ENCODE measurements at regions of chr14 and their contacts with region 1.

Region 1: DNA sequence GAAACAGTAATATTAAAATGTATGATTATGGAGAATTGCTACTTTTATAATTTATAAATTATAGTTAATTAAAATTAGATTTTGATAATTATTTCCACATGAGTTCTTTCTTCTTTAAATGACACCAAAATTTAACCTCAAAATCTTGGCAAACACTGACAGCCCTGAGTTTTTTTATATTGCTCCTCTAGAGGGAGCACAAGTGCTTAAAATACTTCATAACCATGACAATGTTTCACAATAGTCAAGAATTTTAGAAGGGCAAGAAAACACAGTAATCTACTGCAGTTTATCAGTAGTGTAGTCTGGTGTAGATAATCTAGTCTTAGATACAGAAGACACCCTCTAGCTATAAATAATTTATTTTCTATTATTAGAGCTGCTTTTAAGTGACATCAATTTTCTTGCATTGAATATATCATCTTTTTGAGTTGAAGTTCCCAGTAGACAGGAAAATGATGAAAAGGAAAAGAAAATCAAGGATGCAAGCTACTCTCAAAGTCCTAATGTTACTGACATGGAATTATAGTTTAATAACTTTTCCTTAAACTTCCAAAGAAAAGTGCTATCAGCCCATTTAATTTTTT is 14.3 kb upstream of the PTGER2 start:
- DNase-seq: no peak
- H3K4me3 Mint-ChIP-seq: no peak overlapping the region
- H3K27ac Mint-ChIP-seq: no peak overlapping the region
- H3K4me1 Mint-ChIP-seq: peaks cover 6% of the 10 kb centered on the region
- H3K27me3 Mint-ChIP-seq: no peaks in the 10 kb centered on the region

Region 2: DNA sequence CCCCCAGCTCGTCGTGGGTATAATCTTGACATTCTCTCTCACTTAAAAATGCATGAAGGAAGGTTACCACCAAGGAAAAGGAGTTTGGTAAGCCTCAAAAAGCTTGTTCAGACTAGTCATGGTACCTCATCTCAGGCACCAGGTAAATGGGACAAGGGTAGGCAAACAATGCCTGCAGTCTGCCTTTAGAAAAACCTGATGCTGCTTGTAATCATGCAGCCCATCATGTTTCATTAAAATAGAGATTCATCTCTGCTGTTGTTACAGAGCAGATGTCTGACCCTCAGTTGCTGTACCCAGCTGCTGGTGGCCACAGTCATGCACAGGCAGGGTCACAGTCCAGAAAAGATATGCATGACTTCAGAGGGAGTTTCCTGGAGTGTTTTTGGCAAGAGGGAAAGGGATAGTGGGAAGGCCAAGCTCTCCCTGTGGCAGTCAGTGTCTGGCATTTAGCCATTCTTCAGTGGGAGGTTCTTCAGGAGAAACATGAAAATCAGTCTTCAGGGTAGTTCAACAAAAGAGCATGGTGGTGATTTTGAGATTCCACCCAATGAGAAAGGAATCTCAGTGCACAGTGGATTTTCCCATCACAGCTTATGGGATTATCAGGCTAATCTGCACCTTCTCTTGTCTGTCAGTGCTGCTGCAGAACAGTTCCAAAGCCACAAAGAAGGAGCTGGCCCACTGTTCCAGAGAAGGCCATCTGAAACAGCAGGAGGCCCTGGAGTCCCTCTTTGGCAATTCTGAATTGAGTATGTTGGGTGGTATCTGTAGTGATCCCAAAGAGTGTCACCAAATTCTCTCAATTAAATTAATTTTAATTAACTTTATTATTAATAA is 850.7 kb before region 1 on chr14:
- CTCF ChIA-PET with region 1: no interaction called
- intact Hi-C with region 1: no loop called
- DNase-seq: no peak
- H3K4me3 Mint-ChIP-seq: no peak overlapping the region
- H3K27ac Mint-ChIP-seq: no peak overlapping the region
- H3K4me1 Mint-ChIP-seq: no peaks in the 10 kb centered on the region
- H3K27me3 Mint-ChIP-seq: peaks cover 3% of the 10 kb centered on the region

Region 3: GRCh38 chr14:51884086-51884927 is 415.5 kb before region 1 on chr14:
- CTCF ChIA-PET with region 1: no interaction called
- intact Hi-C with region 1: no loop called
- DNase-seq: no peak
- H3K4me3 Mint-ChIP-seq: peak overlapping the region; percentile 36
- H3K27ac Mint-ChIP-seq: peak overlapping the region; percentile 28
- H3K4me1 Mint-ChIP-seq: peaks cover 65% of the 10 kb centered on the region
- H3K27me3 Mint-ChIP-seq: no peaks in the 10 kb centered on the region

Region 4: GRCh38 chr14:52154992-52155650 is 144.7 kb before region 1 on chr14:
- CTCF ChIA-PET with region 1: no interaction called
- intact Hi-C with region 1: no loop called
- DNase-seq: no peak
- H3K4me3 Mint-ChIP-seq: no peak overlapping the region
- H3K27ac Mint-ChIP-seq: no peak overlapping the region
- H3K4me1 Mint-ChIP-seq: peaks cover 16% of the 10 kb centered on the region
- H3K27me3 Mint-ChIP-seq: peaks cover 2% of the 10 kb centered on the region

Region 5: GRCh38 chr14:52259434-52259833 is 40.4 kb before region 1 on chr14:
- CTCF ChIA-PET with region 1: no interaction called
- intact Hi-C with region 1: no loop called
- DNase-seq: no peak
- H3K4me3 Mint-ChIP-seq: no peak overlapping the region
- H3K27ac Mint-ChIP-seq: no peak overlapping the region
- H3K4me1 Mint-ChIP-seq: peaks cover 1% of the 10 kb centered on the region
- H3K27me3 Mint-ChIP-seq: peaks cover 2% of the 10 kb centered on the region

Region 6: DNA sequence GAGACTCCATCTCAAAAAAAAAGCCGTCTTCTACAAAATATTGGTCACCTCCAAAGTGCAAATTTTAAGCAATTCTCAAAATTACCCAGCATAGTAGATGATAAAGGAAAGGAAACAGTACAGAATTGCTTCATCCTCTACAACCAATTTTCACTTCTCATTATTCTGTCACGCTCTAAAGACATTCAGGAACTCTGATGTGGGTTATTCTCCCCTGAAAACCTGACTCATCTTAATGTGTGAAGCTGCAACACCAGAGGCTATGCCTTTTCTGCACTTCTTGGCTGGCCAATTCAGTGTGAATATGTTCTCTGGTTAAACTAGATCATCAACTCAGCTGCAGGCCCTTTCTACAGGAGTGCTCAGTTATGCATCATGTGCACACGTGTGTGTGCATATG is 25.3 kb after region 1 on chr14:
- CTCF ChIA-PET with region 1: interaction called, 14 read pairs
- intact Hi-C with region 1: no loop called
- DNase-seq: peak; percentile 52
- H3K4me3 Mint-ChIP-seq: no peak overlapping the region
- H3K27ac Mint-ChIP-seq: peak overlapping the region; percentile 7
- H3K4me1 Mint-ChIP-seq: peaks cover 47% of the 10 kb centered on the region
- H3K27me3 Mint-ChIP-seq: no peaks in the 10 kb centered on the region

Region 7: GRCh38 chr14:52413729-52414408 is 114.1 kb after region 1 on chr14:
- CTCF ChIA-PET with region 1: interaction called, 4 read pairs
- intact Hi-C with region 1: loop called (anchors 1 kb)
- DNase-seq: no peak
- H3K4me3 Mint-ChIP-seq: peak overlapping the region; percentile 14
- H3K27ac Mint-ChIP-seq: peak overlapping the region; percentile 85
- H3K4me1 Mint-ChIP-seq: peaks cover 39% of the 10 kb centered on the region
- H3K27me3 Mint-ChIP-seq: no peaks in the 10 kb centered on the region

Region 8: DNA sequence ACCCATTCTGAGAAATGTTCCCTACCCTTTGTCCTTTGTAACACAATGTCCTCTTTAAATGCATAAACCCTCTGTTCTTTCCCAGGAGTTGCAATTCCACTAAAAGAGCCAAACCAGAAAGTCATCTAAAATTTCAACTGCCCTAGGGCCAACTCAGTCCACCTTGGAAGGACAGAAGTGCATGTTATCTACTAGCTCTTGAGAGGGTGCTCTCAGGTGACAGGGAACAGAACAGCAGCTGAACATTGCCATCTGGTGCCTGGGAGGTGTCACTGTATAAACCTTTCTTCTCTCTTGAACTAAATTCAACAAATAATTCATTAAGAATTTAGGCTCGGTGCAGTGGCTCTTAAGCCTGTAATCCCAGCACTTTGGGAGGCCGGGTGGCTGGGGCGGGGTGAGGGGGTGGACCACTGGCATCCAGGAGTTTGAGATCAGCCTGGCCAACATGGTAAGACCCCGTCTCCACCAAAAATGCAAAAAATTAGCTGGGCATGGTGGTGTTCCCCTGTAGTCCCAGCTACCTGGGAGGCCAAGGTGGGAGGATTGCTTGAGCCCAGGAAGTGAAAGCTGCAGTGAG is 661.4 kb after region 1 on chr14:
- CTCF ChIA-PET with region 1: no interaction called
- intact Hi-C with region 1: loop called (anchors 2 kb)
- DNase-seq: peak; percentile 73
- H3K4me3 Mint-ChIP-seq: no peak overlapping the region
- H3K27ac Mint-ChIP-seq: no peak overlapping the region
- H3K4me1 Mint-ChIP-seq: peaks cover 6% of the 10 kb centered on the region
- H3K27me3 Mint-ChIP-seq: peaks cover 2% of the 10 kb centered on the region

Region 9: DNA sequence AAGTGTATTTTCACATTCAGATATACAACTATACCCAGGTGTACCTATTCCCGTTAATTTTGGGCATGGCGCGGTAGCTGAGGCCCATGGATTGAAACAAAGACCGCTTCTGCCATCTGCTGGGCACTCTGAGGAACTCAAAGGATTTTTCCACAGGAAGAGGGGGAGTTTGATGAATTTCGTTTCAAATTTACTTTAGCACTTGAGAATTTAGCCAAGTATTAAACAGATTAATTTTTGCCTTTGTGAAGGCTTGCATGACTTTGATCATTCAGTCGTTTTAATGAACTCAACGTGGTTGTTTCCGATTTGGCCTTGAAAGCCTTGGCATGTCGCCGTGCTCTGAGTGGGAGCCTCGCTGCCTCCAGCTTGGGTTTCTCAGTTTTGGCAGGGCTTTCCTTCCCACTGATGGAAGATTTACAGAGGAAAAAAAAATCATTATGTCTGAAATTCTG is 1006.5 kb after region 1 on chr14:
- CTCF ChIA-PET with region 1: no interaction called
- intact Hi-C with region 1: loop called (anchors 2 kb)
- DNase-seq: peak; percentile 60
- H3K4me3 Mint-ChIP-seq: peak overlapping the region; percentile 55
- H3K27ac Mint-ChIP-seq: no peak overlapping the region
- H3K4me1 Mint-ChIP-seq: peaks cover 6% of the 10 kb centered on the region
- H3K27me3 Mint-ChIP-seq: peaks cover 4% of the 10 kb centered on the region